Calu3 (cell line): ENCODE measurements at regions of chr13 and their contacts with region 1.

Region 1: DNA sequence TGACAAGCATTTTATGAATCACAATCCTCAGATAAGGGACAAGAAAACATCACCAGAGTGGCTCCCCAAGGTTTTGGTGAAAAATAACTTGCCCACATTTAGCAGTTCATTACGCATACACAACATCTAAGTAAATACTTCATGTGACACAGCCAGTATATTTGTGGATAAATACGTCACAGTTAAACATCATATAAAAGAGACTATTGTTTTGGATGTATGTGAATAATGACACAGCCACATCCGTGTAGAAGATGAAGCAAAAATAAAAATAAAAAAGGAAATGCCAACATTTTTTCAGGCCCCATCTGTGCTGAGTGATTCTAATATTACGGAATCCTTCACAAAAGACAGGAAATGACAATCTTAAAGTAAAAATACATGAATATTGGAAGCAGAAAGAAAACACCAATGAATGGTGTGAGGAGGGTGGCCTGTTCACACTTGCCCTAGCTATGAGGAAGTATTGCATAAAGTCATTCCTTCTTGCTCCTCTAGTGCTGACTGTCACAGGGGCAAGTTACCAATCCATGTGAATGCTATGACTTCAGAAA is 457.1 kb downstream of the KLF12 start:
- DNase-seq: peak; percentile 4
- H3K4me3 Mint-ChIP-seq: no peak overlapping the region
- H3K27ac Mint-ChIP-seq: peak overlapping the region; percentile 95
- H3K4me1 Mint-ChIP-seq: peaks cover 12% of the 10 kb centered on the region
- H3K27me3 Mint-ChIP-seq: no peaks in the 10 kb centered on the region
- CTCF ChIP-seq: no peak

Region 2: DNA sequence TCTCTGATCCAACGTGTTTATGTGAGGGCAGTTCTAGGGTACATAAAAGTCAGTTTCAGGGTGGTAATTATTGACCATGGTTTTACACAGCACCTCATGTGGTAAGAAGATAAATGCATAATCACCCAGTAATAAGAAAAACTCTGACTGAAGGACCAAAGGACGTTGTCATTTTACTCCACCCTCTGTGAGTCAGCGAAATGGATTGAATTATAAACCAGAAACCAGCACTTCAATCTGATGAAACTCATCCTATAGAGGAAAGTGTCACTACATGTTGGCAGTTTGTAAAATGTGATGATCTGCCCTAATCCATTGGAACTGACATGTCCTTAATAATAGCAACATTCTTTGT is 211.5 kb before region 1 on chr13:
- CTCF ChIA-PET with region 1: no interaction called
- intact Hi-C with region 1: loop called (anchors 10 kb)
- DNase-seq: peak; percentile 13
- H3K4me3 Mint-ChIP-seq: no peak overlapping the region
- H3K27ac Mint-ChIP-seq: peak overlapping the region; percentile 86
- H3K4me1 Mint-ChIP-seq: no peaks in the 10 kb centered on the region
- H3K27me3 Mint-ChIP-seq: no peaks in the 10 kb centered on the region
- CTCF ChIP-seq: no peak

Region 3: DNA sequence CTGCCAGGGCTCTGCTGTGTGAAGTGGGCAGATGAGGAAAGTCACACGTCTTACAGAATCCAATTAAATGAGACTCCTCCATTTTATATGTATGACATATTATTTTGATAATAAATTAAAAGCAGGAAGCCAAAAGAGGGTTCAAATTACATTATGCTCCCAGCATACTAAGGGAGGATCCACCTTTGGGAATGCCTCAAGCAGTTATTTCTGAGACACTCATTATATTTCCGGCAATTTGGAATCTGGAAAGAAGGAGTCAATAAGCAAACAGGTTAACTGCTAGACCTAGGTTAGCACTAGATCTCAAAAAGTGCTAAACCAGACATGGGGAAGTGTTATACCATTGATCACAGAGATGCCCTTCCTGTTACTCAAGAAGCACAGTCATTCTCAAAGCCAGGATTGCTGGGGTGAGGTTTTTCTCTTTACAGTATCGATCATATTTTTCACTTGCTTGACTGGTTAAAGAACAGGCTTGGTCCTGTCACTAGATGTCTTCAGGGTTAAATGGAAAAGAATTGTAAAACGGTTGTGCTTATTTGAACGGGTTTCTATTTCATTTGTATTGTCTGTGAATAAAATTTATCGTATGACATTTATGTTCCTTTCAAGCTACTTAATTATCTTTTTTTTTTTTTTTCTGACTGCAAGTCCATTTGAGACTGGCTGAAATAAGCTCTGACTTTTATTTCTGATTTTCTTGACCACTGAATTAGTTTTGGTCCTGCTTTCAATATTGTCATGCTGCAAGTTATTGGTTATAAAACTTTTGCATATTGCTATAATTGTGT is 66.1 kb before region 1 on chr13:
- CTCF ChIA-PET with region 1: no interaction called
- intact Hi-C with region 1: loop called (anchors 2 kb)
- DNase-seq: peak; percentile 10
- H3K4me3 Mint-ChIP-seq: no peak overlapping the region
- H3K27ac Mint-ChIP-seq: no peak overlapping the region
- H3K4me1 Mint-ChIP-seq: no peaks in the 10 kb centered on the region
- H3K27me3 Mint-ChIP-seq: no peaks in the 10 kb centered on the region
- CTCF ChIP-seq: no peak